Transverse colon (tissue), 4 donors: ENCODE measurements at regions of chr15 and their contacts with region 1.

Region 1: GRCh38 chr15:27601239-27601960 is 497.7 kb downstream of the OCA2 start:
- DNase-seq: no peak
- H3K4me3 ChIP-seq: no peak overlapping the region
- H3K27ac ChIP-seq: no peak overlapping the region
- H3K4me1 ChIP-seq: no peaks in the 10 kb centered on the region
- H3K27me3 ChIP-seq: no peaks in the 10 kb centered on the region
- CTCF ChIP-seq: no peak
- EP300 ChIP-seq: no peak
- POLR2A ChIP-seq: no peak

Region 2: GRCh38 chr15:27512281-27513001 is 89.0 kb before region 1 on chr15:
- in situ Hi-C with region 1: no loop called
- intact Hi-C with region 1: no loop called
- DNase-seq: no peak
- H3K4me3 ChIP-seq: no peak overlapping the region
- H3K27ac ChIP-seq: no peak overlapping the region
- H3K4me1 ChIP-seq: no peaks in the 10 kb centered on the region
- H3K27me3 ChIP-seq: no peaks in the 10 kb centered on the region
- CTCF ChIP-seq: no peak
- EP300 ChIP-seq: no peak
- POLR2A ChIP-seq: no peak

Region 3: DNA sequence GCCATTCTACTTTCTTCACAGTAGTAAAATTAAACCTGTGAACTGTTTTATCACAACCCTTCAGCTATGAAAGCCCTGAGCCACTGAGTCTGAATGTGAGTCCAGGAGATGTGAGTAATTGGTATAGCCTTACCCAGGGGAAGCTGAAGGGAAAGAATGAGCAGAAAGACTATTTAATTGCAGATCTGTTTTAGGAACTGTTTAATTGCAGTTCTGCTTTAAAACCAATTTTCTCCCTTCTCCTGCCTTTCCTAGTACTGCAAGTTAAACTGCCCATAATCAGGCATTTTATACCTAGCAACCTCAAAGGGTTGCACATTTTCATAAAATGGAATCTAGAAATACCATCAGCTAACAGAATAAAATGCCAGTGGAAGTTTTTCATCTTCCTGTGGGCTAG is 21.0 kb after region 1 on chr15:
- in situ Hi-C with region 1: no loop called
- intact Hi-C with region 1: loop called (anchors 1 kb)
- DNase-seq: no peak
- H3K4me3 ChIP-seq: no peak overlapping the region
- H3K27ac ChIP-seq: no peak overlapping the region
- H3K4me1 ChIP-seq: no peaks in the 10 kb centered on the region
- H3K27me3 ChIP-seq: no peaks in the 10 kb centered on the region
- CTCF ChIP-seq: no peak
- EP300 ChIP-seq: no peak
- POLR2A ChIP-seq: no peak